ENCODE measurements at regions of chr10 and their contacts with region 1.

Region 1: DNA sequence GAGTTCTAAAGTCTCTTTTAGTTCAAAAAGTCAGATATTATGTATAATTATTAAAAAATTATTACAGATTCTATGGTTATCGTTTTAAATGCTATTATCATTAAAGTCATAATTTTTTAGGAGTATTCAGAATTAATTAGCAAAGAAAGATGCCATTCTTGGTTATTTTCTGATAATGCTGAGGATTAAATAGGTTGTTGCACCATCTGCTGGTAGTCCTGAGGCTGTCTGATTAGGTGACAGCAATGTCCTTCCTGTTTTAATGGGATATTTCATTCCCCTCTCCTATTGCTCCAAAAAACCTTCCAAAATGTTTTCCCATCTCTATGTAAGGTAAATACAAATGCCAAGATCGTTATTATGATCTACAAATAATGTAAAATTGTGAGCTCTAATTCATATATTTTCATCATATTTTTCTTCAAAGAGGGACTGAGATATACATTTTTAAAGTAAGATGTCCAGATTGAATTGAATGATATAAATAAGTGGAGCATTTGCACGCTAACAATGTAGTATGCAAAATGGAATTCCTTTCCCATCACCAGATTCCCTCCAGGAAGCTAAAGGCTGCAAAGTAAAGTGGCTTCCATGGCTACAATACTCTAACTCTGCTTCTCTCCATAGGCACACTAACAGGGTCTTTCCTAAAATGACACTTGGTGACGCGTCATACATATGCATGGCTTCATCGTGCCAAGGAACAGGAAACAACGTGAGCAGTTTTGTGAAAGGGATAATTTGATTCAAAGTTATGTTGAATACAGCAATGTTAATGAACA is 58.8 kb upstream of the AKR1E2 start:
- DNase-seq: no peak
- H3K4me3 ChIP-seq: no peak overlapping the region
- H3K27ac ChIP-seq: no peak overlapping the region
- H3K4me1 ChIP-seq: peaks cover 0 to 15% of the 10 kb centered on the region in 2 donors
- H3K27me3 ChIP-seq: no peaks in the 10 kb centered on the region
- CTCF ChIP-seq: peak; percentile 65 to 81 (median 73)

Region 2: GRCh38 chr10:3197348-3198003 is 1569.7 kb before region 1 on chr10:
- intact Hi-C with region 1: loop called (anchors 2 kb)
- DNase-seq: peak; percentile 26 to 90
- H3K4me3 ChIP-seq: peak overlapping the region in 1 of 2 donors; percentile 54
- H3K27ac ChIP-seq: no peak overlapping the region
- H3K4me1 ChIP-seq: peaks cover 3 to 4% of the 10 kb centered on the region in 2 donors
- H3K27me3 ChIP-seq: no peaks in the 10 kb centered on the region
- CTCF ChIP-seq: peak; percentile 95 to 96 (median 96)

Region 3: DNA sequence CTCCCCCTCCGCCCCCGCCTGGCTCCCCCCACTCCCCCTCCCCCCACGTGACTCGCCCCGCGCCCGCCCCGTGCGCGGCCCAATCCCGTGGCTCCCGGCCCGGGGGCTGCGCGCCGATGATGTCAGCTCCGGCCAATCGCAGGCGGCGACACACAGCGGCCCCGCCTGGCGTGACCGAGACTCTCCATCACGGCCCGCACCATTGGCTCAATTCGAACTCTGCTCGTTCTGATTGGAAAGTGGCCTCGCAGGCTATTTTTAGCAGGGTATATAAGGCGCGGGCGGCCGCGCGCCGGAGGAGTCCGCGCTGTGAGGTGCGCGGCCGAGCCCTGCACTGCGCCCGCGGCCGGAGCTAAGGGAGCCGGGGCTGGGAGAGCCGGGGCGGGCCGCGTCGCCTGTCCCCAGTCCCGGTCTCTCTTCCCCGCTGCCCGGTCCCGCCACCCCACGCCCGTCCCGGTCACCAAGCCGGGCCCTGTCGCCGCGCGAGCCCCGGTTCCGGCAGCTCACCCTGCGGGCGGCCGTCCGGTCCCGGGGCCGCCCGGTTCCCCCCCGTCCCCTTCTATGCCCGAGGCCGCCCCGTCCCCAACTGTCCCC is 981.9 kb before region 1 on chr10:
- intact Hi-C with region 1: loop called (anchors 5 kb)
- DNase-seq: peak; percentile 94 to 99
- H3K4me3 ChIP-seq: peak overlapping the region; percentile 97 to 99
- H3K27ac ChIP-seq: peak overlapping the region; percentile 100
- H3K4me1 ChIP-seq: peaks cover 0 to 4% of the 10 kb centered on the region in 2 donors
- H3K27me3 ChIP-seq: no peaks in the 10 kb centered on the region
- CTCF ChIP-seq: no peak

Region 4: GRCh38 chr10:4067531-4067930 is 699.7 kb before region 1 on chr10:
- intact Hi-C with region 1: loop called (anchors 10 kb)
- DNase-seq: no peak
- H3K4me3 ChIP-seq: no peak overlapping the region
- H3K27ac ChIP-seq: peak overlapping the region; percentile 7 to 68
- H3K4me1 ChIP-seq: peaks cover 5 to 24% of the 10 kb centered on the region in 2 donors
- H3K27me3 ChIP-seq: no peaks in the 10 kb centered on the region
- CTCF ChIP-seq: no peak

Region 5: GRCh38 chr10:4498711-4499251 is 268.4 kb before region 1 on chr10:
- intact Hi-C with region 1: loop called (anchors 5 kb)
- DNase-seq: no peak
- H3K4me3 ChIP-seq: no peak overlapping the region
- H3K27ac ChIP-seq: peak overlapping the region; percentile 93 to 95
- H3K4me1 ChIP-seq: peaks cover 8 to 20% of the 10 kb centered on the region in 2 donors
- H3K27me3 ChIP-seq: no peaks in the 10 kb centered on the region
- CTCF ChIP-seq: no peak

Measured in ascending aorta (tissue), 2 donors.